Calu3 (cell line): ENCODE measurements at regions of chr2 and their contacts with region 1.

Region 1: GRCh38 chr2:50167271-50167670 is 864.7 kb downstream of the NRXN1 start:
- DNase-seq: no peak
- H3K4me3 Mint-ChIP-seq: no peak overlapping the region
- H3K27ac Mint-ChIP-seq: no peak overlapping the region
- H3K4me1 Mint-ChIP-seq: no peaks in the 10 kb centered on the region
- H3K27me3 Mint-ChIP-seq: peaks cover 13% of the 10 kb centered on the region
- CTCF ChIP-seq: no peak

Region 2: GRCh38 chr2:50181212-50181611 is 13.9 kb after region 1 on chr2:
- CTCF ChIA-PET with region 1: no interaction called
- intact Hi-C with region 1: loop called (anchors 1 kb)
- DNase-seq: no peak
- H3K4me3 Mint-ChIP-seq: no peak overlapping the region
- H3K27ac Mint-ChIP-seq: no peak overlapping the region
- H3K4me1 Mint-ChIP-seq: no peaks in the 10 kb centered on the region
- H3K27me3 Mint-ChIP-seq: no peaks in the 10 kb centered on the region
- CTCF ChIP-seq: no peak